Activated B cell treated with CpG ODN at 0.5 μM for 24 hours (primary cell): ENCODE measurements at regions of chr4 and their contacts with region 1.

Region 1: DNA sequence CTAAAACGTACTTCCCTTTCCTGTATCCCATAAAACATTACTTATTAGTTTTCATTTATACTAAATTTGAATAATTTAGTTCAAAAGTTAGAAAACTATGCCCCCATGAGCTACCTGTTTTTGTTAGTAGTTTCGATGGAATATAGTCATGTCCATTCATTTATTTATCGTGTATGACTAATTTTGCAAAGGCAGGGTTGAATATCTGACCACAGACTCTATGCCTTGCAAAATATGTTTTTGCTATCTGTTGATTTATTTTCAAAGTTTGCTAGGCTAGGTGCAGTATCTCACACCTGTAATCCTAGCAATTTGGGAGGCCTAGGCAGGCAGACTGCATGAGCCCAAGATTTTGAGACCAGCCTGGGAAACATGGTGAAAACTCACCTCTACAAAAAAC is 78.4 kb downstream of the PDS5A start:
- DNase-seq: no peak
- ATAC-seq: no peak
- H3K4me3 Mint-ChIP-seq: no peak overlapping the region
- H3K27ac Mint-ChIP-seq: peak overlapping the region; percentile 20
- H3K4me1 Mint-ChIP-seq: no peaks in the 10 kb centered on the region
- H3K27me3 Mint-ChIP-seq: no peaks in the 10 kb centered on the region
- CTCF ChIP-seq: no peak

Region 2: DNA sequence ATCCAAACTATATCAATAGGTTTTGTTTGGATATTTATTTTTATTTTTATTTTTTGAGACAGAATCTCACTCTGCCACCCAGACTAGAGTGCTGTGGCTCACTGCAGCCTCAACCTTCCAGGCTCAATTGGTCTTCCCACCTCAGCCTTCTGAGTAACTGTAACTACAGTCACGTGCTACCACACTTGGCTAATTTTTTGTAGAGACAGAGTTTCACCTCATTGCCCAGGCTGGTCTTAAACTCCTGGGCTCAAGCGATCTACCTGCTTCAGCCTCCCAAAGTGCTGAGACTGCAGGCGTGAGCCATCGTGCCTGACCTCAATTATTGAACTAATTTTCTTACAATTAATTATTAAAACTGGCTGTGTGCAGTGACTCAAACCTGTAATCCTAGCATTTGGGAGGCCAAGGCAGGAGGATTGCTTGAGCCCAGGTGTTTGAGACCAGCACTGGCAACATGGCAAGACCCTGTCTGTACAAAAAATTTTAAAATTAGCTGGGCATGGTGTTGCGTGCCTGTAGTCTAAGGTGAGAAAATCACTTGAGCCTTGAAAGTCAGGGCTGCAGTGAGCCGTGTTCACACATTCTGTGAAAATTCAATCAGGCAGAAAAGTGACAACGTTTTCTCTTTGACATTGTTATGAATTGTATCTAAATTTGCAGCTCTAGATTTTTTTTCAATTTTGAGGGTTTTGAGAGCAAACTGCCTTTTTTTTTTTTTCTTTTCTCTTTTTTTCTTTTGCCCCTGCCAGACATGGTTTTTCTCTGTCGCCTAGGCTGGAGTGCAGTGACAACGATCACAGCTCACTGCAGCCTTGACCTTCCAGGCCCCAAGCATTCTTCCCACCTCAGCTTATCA is 135.3 kb before region 1 on chr4:
- CTCF ChIA-PET with region 1: no interaction called
- POLR2A ChIA-PET with region 1: no interaction called
- intact Hi-C with region 1: no loop called
- DNase-seq: no peak
- ATAC-seq: no peak
- H3K4me3 Mint-ChIP-seq: no peak overlapping the region
- H3K27ac Mint-ChIP-seq: peak overlapping the region; percentile 69
- H3K4me1 Mint-ChIP-seq: peaks cover 14% of the 10 kb centered on the region
- H3K27me3 Mint-ChIP-seq: no peaks in the 10 kb centered on the region
- CTCF ChIP-seq: no peak

Region 3: DNA sequence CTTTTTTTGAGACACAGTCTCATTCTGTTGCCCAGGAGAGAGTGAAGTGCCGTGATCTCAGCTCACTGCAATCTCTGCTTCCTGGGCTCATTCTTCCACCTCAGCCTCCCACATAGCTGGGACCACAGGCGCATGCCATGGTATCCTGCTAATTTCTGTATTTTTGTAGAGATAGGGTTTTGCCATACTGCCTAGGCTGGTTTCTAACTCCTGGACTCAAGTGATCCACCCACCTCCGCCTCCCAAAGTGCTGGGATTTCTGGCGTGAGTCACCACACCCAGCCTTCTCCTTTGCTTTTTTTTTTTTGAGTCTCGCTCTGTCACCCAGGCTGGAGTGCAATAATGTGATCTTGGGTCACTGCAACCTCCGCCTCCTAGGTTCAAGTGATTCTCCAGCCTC is 15.6 kb before region 1 on chr4:
- CTCF ChIA-PET with region 1: no interaction called
- POLR2A ChIA-PET with region 1: no interaction called
- intact Hi-C with region 1: no loop called
- DNase-seq: no peak
- ATAC-seq: no peak
- H3K4me3 Mint-ChIP-seq: no peak overlapping the region
- H3K27ac Mint-ChIP-seq: peak overlapping the region; percentile 59
- H3K4me1 Mint-ChIP-seq: peaks cover 8% of the 10 kb centered on the region
- H3K27me3 Mint-ChIP-seq: no peaks in the 10 kb centered on the region
- CTCF ChIP-seq: no peak

Region 4: GRCh38 chr4:39933671-39934590 is 34.6 kb after region 1 on chr4:
- CTCF ChIA-PET with region 1: no interaction called
- POLR2A ChIA-PET with region 1: no interaction called
- intact Hi-C with region 1: loop called (anchors 5 kb)
- DNase-seq: no peak
- ATAC-seq: no peak
- H3K4me3 Mint-ChIP-seq: no peak overlapping the region
- H3K27ac Mint-ChIP-seq: peak overlapping the region; percentile 76
- H3K4me1 Mint-ChIP-seq: peaks cover 62% of the 10 kb centered on the region
- H3K27me3 Mint-ChIP-seq: no peaks in the 10 kb centered on the region
- CTCF ChIP-seq: no peak

Region 5: DNA sequence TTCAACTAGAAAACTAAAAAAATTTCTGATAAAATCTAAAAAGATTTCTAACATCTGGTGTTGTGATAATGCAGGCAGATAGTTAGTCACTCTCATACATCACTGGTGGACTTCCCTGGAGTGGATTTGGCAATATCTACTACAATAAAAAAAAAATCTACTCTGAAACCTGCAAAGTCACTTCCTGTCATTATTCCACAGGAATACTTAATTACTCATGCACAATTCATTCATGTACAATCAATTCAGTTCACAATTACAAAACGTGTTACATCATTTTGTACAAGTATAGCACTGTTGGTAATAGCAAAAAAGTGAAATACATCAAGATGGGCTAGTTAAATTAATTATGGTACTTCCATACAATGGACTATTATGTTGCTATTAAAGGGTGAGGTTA is 281.1 kb after region 1 on chr4:
- CTCF ChIA-PET with region 1: no interaction called
- POLR2A ChIA-PET with region 1: no interaction called
- intact Hi-C with region 1: no loop called
- DNase-seq: no peak
- ATAC-seq: no peak
- H3K4me3 Mint-ChIP-seq: no peak overlapping the region
- H3K27ac Mint-ChIP-seq: peak overlapping the region; percentile 12
- H3K4me1 Mint-ChIP-seq: peaks cover 62% of the 10 kb centered on the region
- H3K27me3 Mint-ChIP-seq: no peaks in the 10 kb centered on the region
- CTCF ChIP-seq: no peak